ENCODE measurements at regions of chr4 and their contacts with region 1.

Region 1: GRCh38 chr4:122827879-122828601 is 1.4 kb downstream of the FGF2 start:
- DNase-seq: peak; percentile 18
- H3K4me3 Mint-ChIP-seq: peak overlapping the region; percentile 91
- H3K27ac Mint-ChIP-seq: peak overlapping the region; percentile 89
- H3K4me1 Mint-ChIP-seq: peaks cover 51% of the 10 kb centered on the region
- H3K27me3 Mint-ChIP-seq: no peaks in the 10 kb centered on the region
- CTCF ChIP-seq: no peak

Region 2: GRCh38 chr4:122764821-122765215 is 63.2 kb before region 1 on chr4:
- CTCF ChIA-PET with region 1: no interaction called
- intact Hi-C with region 1: loop called (anchors 5 kb)
- DNase-seq: no peak
- H3K4me3 Mint-ChIP-seq: peak overlapping the region; percentile 2
- H3K27ac Mint-ChIP-seq: peak overlapping the region; percentile 95
- H3K4me1 Mint-ChIP-seq: peaks cover 21% of the 10 kb centered on the region
- H3K27me3 Mint-ChIP-seq: no peaks in the 10 kb centered on the region
- CTCF ChIP-seq: no peak

Region 3: GRCh38 chr4:122783301-122784215 is 44.5 kb before region 1 on chr4:
- CTCF ChIA-PET with region 1: no interaction called
- intact Hi-C with region 1: loop called (anchors 5 kb)
- DNase-seq: peak; percentile 70
- H3K4me3 Mint-ChIP-seq: peak overlapping the region; percentile 2
- H3K27ac Mint-ChIP-seq: peak overlapping the region; percentile 85
- H3K4me1 Mint-ChIP-seq: peaks cover 38% of the 10 kb centered on the region
- H3K27me3 Mint-ChIP-seq: no peaks in the 10 kb centered on the region
- CTCF ChIP-seq: no peak

Region 4: GRCh38 chr4:122898370-122899150 is 70.5 kb after region 1 on chr4:
- CTCF ChIA-PET with region 1: no interaction called
- intact Hi-C with region 1: loop called (anchors 10 kb)
- DNase-seq: peak; percentile 37
- H3K4me3 Mint-ChIP-seq: no peak overlapping the region
- H3K27ac Mint-ChIP-seq: peak overlapping the region; percentile 86
- H3K4me1 Mint-ChIP-seq: peaks cover 10% of the 10 kb centered on the region
- H3K27me3 Mint-ChIP-seq: no peaks in the 10 kb centered on the region
- CTCF ChIP-seq: no peak

Region 5: DNA sequence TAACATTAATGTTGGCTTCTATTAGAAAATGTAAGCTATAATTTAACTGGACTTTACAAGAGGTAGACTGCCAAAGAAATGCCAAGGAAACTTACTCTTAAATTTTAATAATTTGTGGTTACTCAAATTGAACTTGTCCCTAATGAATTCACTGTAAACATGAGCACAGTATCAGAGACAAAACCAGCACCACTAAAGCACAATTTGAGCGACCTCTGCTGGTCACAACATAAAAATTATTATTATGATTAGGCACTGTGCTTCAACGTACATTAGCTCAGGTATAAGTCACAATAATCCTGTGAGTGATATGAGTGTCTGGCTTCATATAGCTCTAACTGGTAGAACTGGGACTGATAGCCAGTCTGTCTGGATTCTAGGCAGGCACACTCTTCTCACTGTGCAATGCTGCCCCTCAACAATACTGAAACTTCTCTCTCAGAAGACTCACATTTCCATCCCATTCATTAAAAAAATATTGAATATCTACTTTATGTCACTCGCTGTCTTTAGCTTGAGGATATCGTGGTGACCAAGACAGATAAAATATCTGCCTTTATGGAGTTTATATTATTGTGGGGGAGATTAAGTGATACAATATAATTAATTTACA is 86.4 kb after region 1 on chr4:
- CTCF ChIA-PET with region 1: interaction called, 4 read pairs
- intact Hi-C with region 1: loop called (anchors 5 kb)
- DNase-seq: no peak
- H3K4me3 Mint-ChIP-seq: no peak overlapping the region
- H3K27ac Mint-ChIP-seq: no peak overlapping the region
- H3K4me1 Mint-ChIP-seq: peaks cover 9% of the 10 kb centered on the region
- H3K27me3 Mint-ChIP-seq: no peaks in the 10 kb centered on the region
- CTCF ChIP-seq: no peak